Head of caudate nucleus (tissue), 42 donors: ENCODE measurements at regions of chr4 and their contacts with region 1.

Region 1: GRCh38 chr4:39458505-39459300 is at the starts of genes LIAS and RPL9:
- DNase-seq: peak; percentile 76 to 97 (median 93)

Region 2: GRCh38 chr4:39365830-39366771 is 92.6 kb before region 1 on chr4 and contains the start of gene RFC1:
- intact Hi-C with region 1: loop called (anchors 10 kb)
- DNase-seq: peak; percentile 76 to 96 (median 90)